ENCODE measurements at regions of chr7 and their contacts with region 1.

Region 1: DNA sequence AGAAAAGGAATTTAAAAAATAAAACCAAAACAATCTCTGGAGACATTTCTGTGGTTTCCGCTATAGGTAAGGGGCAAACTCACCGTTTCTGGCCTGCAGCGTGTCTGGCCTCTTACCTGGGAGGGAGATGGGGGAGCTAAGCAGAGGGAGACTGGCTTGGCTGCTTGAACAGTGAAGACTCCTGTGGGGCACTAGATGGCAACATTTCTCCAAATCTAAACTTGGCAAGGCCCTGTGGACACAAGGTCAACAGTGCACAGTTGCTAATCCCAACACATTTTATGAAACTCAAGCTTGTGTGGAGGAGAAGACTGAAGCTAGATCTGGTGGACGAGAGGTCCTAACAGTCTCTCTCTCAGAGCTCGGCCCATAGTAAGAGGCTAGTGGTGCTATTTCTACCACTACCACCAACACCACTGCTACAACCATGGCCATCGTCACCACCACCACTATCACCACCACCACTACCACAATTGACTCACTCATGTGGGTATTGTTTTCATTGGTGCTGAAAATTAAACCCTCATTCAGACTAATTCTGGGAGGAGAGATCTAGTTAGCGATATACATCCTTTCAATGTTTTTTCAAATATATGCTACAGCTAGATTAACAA is 28.4 kb upstream of the CDHR3 start:
- DNase-seq: no peak
- H3K4me3 ChIP-seq: no peak overlapping the region
- H3K27ac ChIP-seq: peak overlapping the region; percentile 72 to 79 (median 76)
- H3K4me1 ChIP-seq: peaks cover 14 to 37% (median 32%) of the 10 kb centered on the region in 4 donors
- H3K27me3 ChIP-seq: no peaks in the 10 kb centered on the region
- CTCF ChIP-seq: peak; percentile 37 to 58 (median 48)
- EP300 ChIP-seq: no peak
- POLR2A ChIP-seq: no peak

Region 2: GRCh38 chr7:106009403-106010226 is 74.9 kb after region 1 on chr7:
- intact Hi-C with region 1: loop called (anchors 2 kb)
- DNase-seq: peak; percentile 95
- H3K4me3 ChIP-seq: peak overlapping the region; percentile 12 to 46 (median 26)
- H3K27ac ChIP-seq: peak overlapping the region; percentile 69 to 84 (median 78)
- H3K4me1 ChIP-seq: peaks cover 7 to 50% (median 42%) of the 10 kb centered on the region in 4 donors
- H3K27me3 ChIP-seq: no peaks in the 10 kb centered on the region
- CTCF ChIP-seq: peak; percentile 95 to 99 (median 98)
- EP300 ChIP-seq: no peak
- POLR2A ChIP-seq: no peak

Region 3: GRCh38 chr7:106041140-106041717 is 106.5 kb after region 1 on chr7:
- intact Hi-C with region 1: loop called (anchors 2 kb)
- DNase-seq: no peak
- H3K4me3 ChIP-seq: no peak overlapping the region
- H3K27ac ChIP-seq: no peak overlapping the region
- H3K4me1 ChIP-seq: peaks cover 2 to 21% (median 16%) of the 10 kb centered on the region in 4 donors
- H3K27me3 ChIP-seq: no peaks in the 10 kb centered on the region
- CTCF ChIP-seq: peak; percentile 44 to 72 (median 49)
- EP300 ChIP-seq: no peak
- POLR2A ChIP-seq: no peak

Region 4: GRCh38 chr7:106176414-106177299 is 242.0 kb after region 1 on chr7:
- intact Hi-C with region 1: no loop called
- DNase-seq: peak; percentile 96
- H3K4me3 ChIP-seq: no peak overlapping the region
- H3K27ac ChIP-seq: peak overlapping the region in 1 of 4 donors; percentile 15
- H3K4me1 ChIP-seq: peaks cover 13 to 36% (median 16%) of the 10 kb centered on the region in 4 donors
- H3K27me3 ChIP-seq: no peaks in the 10 kb centered on the region
- CTCF ChIP-seq: peak; percentile 96 to 98 (median 97)
- EP300 ChIP-seq: no peak
- POLR2A ChIP-seq: no peak